ENCODE measurements at regions of chr5 and their contacts with region 1.

Region 1: GRCh38 chr5:41809128-41809527 is 61.1 kb downstream of the OXCT1 start:
- H3K4me3 Mint-ChIP-seq: no peak overlapping the region
- H3K27ac Mint-ChIP-seq: no peak overlapping the region
- H3K4me1 Mint-ChIP-seq: peaks cover 14% of the 10 kb centered on the region
- H3K27me3 Mint-ChIP-seq: no peaks in the 10 kb centered on the region

Region 2: GRCh38 chr5:41445932-41446563 is 363.1 kb before region 1 on chr5:
- intact Hi-C with region 1: no loop called
- H3K4me3 Mint-ChIP-seq: no peak overlapping the region
- H3K27ac Mint-ChIP-seq: no peak overlapping the region
- H3K4me1 Mint-ChIP-seq: no peaks in the 10 kb centered on the region
- H3K27me3 Mint-ChIP-seq: no peaks in the 10 kb centered on the region

Region 3: DNA sequence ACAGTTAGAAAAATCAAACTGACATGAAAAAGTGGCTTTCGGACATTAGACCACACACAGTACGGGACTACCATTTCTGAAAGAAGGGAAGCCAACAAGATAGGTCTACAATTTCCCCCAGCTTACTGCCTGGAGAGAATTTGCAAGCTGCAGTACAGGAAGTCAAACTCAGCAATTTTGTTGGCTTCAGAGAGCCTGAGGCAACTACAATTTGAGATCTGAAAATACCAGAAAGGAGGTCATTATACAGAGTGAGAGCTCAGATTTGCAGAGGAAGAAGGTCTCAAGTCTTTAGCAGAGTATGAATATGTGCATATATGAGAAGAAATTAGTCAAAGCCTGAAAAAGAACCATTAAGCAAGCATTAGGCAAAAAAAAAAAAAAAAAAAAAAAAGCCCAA is 21.9 kb before region 1 on chr5:
- intact Hi-C with region 1: loop called (anchors 2 kb)
- H3K4me3 Mint-ChIP-seq: no peak overlapping the region
- H3K27ac Mint-ChIP-seq: no peak overlapping the region
- H3K4me1 Mint-ChIP-seq: no peaks in the 10 kb centered on the region
- H3K27me3 Mint-ChIP-seq: no peaks in the 10 kb centered on the region

Region 4: DNA sequence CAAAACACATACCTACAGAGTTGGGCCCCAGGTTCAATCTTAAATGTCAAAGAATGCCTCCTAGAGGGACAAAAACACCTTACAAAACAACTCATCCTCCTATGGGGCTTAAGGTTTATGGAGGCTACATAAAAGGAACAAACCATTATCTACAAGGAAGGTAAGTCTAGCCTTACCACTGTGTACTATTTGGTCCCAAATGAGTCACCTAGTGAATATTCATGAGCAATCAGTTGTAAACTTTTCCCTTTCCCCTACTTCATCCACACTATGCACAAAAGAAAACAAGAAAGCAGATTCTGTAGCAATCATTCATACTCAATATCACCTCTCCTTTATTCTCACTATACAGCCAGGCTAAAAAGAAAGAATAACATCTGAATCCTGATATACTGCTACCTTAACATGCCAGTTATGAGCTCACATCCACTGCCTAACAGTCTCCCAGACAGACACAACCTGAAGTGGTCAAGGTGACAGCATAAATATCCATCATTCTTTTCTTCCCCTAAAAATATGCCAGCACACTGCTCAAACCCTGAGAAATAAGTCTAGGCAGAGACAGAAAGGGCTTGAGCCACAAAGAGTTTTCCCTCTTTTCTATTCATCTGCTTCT is 54.9 kb after region 1 on chr5:
- intact Hi-C with region 1: no loop called
- H3K4me3 Mint-ChIP-seq: no peak overlapping the region
- H3K27ac Mint-ChIP-seq: no peak overlapping the region
- H3K4me1 Mint-ChIP-seq: peaks cover 2% of the 10 kb centered on the region
- H3K27me3 Mint-ChIP-seq: peaks cover 3% of the 10 kb centered on the region